ENCODE measurements at regions of chr2 and their contacts with region 1.

Region 1: GRCh38 chr2:177263451-177264208 is 897 bp downstream of the NFE2L2 start:
- DNase-seq: peak; percentile 99
- H3K4me3 ChIP-seq: peak overlapping the region; percentile 73 to 96 (median 86)
- H3K27ac ChIP-seq: peak overlapping the region; percentile 98 to 100 (median 98)
- H3K4me1 ChIP-seq: peaks cover 15 to 61% (median 49%) of the 10 kb centered on the region in 4 donors
- H3K27me3 ChIP-seq: no peaks in the 10 kb centered on the region
- CTCF ChIP-seq: peak; percentile 79 to 97 (median 87)
- EP300 ChIP-seq: peak; percentile 83
- POLR2A ChIP-seq: peak; percentile 85

Region 2: GRCh38 chr2:177212106-177212890 is 51.3 kb before region 1 on chr2 and contains the start of gene HNRNPA3:
- in situ Hi-C with region 1: no loop called
- intact Hi-C with region 1: loop called (anchors 2 kb)
- DNase-seq: peak; percentile 100
- H3K4me3 ChIP-seq: peak within 1 kb of the TSS; percentile 66 to 89 (median 79)
- H3K27ac ChIP-seq: peak within 1 kb of the TSS; percentile 97 to 100 (median 98)
- H3K4me1 ChIP-seq: peaks cover 26 to 49% (median 40%) of the 10 kb centered on the region in 4 donors
- H3K27me3 ChIP-seq: no peaks in the 10 kb centered on the region
- CTCF ChIP-seq: peak in 3 of 5 experiments; percentile 27 to 37 (median 32)
- EP300 ChIP-seq: no peak
- POLR2A ChIP-seq: peak; percentile 97
- total RNA-seq, gene HNRNPA3: 40.6 to 83.2 (median 57.4) TPM